ENCODE measurements at regions of chr4 and their contacts with region 1.

Region 1: DNA sequence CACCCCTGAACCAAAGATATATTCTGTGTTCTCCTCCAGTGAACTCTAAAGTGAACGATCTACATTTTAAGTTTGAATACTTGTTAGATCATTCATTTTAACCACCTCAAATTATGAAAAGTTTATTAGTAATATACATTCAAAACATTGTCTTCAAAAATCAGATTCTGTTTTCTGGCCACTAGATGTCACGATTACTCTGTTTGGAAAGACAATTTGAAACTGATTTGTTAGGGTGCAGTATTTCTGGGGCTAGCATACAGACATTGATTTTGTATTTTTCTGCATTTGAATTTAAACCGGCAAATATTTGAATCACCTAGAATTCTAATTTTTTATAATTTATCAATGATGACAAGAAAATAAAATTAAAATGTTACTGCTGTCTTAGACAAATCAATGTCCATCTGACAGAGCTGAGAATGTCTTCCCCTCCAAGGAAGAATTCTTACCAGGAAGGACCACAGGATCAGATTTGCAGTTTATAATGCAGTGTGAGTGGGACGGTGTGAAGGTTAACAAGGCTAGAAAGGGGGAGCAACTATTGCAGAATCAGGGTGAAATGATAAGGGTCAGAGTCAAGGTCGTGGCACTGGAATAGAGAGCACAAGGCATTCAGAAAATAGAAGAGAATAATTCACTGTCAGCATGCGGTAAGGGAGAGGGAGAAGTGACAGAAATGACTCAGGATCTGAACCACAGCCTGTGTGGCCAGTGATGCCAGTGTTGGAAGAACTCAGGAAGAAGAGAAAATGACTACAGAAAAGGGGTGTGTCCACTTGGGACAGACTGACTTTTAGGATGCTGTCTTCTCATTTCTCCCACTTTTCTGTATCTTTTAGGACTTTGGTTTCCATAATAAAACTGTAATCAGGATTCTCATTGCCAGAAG is 91.6 kb downstream of the ANXA10 start:
- DNase-seq: peak; percentile 51
- H3K4me3 ChIP-seq: no peak overlapping the region
- H3K27ac ChIP-seq: no peak overlapping the region
- H3K4me1 ChIP-seq: no peaks in the 10 kb centered on the region
- H3K27me3 ChIP-seq: no peaks in the 10 kb centered on the region
- CTCF ChIP-seq: peak; percentile 72

Region 2: GRCh38 chr4:167406181-167406580 is 777.8 kb before region 1 on chr4:
- CTCF ChIA-PET with region 1: no interaction called
- POLR2A ChIA-PET with region 1: no interaction called
- intact Hi-C with region 1: no loop called
- DNase-seq: no peak
- H3K4me3 ChIP-seq: no peak overlapping the region
- H3K27ac ChIP-seq: no peak overlapping the region
- H3K4me1 ChIP-seq: no peaks in the 10 kb centered on the region
- H3K27me3 ChIP-seq: no peaks in the 10 kb centered on the region
- CTCF ChIP-seq: no peak

Region 3: GRCh38 chr4:168514249-168514852 is 330.4 kb after region 1 on chr4:
- CTCF ChIA-PET with region 1: no interaction called
- POLR2A ChIA-PET with region 1: no interaction called
- intact Hi-C with region 1: loop called (anchors 5 kb)
- DNase-seq: peak; percentile 67
- H3K4me3 ChIP-seq: no peak overlapping the region
- H3K27ac ChIP-seq: no peak overlapping the region
- H3K4me1 ChIP-seq: peaks cover 4% of the 10 kb centered on the region
- H3K27me3 ChIP-seq: no peaks in the 10 kb centered on the region
- CTCF ChIP-seq: peak; percentile 65

Region 4: DNA sequence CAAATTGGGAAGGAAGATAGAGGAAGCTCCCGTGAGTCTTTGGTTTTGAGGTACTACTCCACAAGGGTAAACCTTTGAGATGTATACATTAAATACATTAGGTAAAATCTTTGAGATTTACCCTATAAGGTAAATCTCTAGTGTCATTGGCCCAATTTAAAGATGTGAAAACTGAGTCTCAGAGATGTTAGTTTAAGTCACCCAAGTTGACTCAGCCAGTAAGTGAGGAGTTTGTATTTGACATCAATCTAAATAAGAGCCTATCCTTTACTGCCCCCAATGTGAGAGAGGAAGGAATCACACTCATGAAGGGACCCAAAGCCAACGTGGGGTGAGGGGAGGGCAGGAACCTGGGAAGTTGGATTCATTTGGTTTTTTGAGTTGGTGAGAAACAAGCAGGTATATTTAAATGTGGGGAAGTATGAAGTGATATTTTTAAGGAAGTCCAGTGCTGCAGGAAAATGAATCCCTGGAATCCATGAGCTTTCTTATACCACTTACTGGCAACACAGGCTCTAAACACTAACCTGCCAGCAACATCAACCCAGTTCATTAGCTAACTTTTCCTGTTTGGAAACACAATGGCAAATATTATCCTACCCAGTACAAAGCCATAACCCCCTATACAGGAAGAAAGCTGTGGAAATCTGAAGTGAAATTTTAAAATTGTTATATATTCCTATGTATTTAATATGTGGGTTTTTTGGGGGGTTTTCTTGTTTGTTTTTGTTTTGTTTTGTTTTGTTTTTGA is 368.2 kb after region 1 on chr4:
- CTCF ChIA-PET with region 1: no interaction called
- POLR2A ChIA-PET with region 1: no interaction called
- intact Hi-C with region 1: loop called (anchors 10 kb)
- DNase-seq: peak; percentile 48
- H3K4me3 ChIP-seq: no peak overlapping the region
- H3K27ac ChIP-seq: no peak overlapping the region
- H3K4me1 ChIP-seq: peaks cover 42% of the 10 kb centered on the region
- H3K27me3 ChIP-seq: no peaks in the 10 kb centered on the region
- CTCF ChIP-seq: peak; percentile 42; the same call in 1 of the 2 replicates

Region 5: DNA sequence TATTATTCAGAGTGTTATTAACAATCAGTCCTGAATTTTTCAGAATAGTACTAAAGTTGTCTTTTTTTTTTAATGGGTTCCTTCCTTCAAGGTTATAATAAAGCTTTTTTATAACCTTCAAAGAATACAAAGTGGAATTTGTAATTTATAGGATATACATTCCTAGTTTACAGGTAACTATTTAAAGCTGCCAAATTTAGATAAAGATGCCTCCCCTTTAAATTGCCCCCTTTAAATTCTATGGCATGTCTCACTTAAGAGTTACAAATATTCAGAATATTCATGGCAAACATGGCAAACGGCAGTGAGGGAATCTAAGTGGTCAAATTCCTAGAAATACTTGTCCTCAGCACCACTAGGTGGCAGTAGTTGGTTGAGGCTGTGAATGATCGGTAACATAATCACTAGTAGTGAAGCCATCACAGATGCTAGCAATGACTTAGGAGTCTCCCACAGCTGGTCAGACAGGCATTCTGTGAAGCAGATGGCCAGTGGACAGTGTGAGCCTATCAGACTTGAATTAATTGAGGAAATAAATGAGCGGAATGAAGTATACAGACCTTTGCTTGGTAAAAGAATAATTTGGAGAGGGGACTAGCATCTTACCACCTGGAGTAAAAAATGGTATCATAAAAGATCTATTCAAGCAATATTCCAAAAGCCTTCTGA is 739.7 kb after region 1 on chr4:
- CTCF ChIA-PET with region 1: no interaction called
- POLR2A ChIA-PET with region 1: no interaction called
- intact Hi-C with region 1: loop called (anchors 5 kb)
- DNase-seq: peak; percentile 83
- H3K4me3 ChIP-seq: no peak overlapping the region
- H3K27ac ChIP-seq: no peak overlapping the region
- H3K4me1 ChIP-seq: no peaks in the 10 kb centered on the region
- H3K27me3 ChIP-seq: no peaks in the 10 kb centered on the region
- CTCF ChIP-seq: peak; percentile 80

Region 6: DNA sequence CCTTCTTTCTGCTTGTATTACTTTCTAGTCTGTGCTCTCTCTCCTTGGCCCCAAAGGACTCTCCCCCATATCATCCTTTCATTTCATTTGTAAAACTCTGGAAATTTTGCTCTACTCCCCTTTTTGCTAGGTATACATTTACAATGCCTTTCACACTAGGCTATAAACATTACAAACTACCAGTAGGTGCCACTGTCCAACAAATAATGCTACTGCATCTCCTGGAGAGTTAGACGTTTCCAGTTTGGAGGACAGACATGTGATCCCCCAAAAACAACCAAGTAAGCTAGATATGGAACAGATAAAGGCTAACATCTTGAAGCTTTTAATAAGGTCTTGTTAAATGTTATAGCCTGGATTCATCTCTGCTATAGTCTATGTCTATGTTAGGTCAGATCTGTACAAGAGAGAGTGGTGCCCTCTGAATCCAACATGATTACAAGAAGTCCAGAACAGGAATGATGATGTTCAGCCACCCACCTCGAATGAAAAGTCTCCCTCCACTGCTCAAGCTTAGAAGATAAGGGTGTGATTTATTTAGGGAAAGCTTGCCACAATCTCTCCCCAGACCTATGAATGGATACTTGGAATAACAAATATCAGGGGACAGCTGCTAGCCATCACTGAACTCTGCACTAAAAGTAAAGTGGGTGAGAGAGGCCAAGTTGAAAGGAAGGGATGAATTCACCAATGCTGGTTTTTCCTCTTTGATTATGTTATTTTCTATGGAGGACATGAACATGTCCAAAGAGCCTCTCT is 811.8 kb after region 1 on chr4:
- CTCF ChIA-PET with region 1: no interaction called
- POLR2A ChIA-PET with region 1: no interaction called
- intact Hi-C with region 1: loop called (anchors 5 kb)
- DNase-seq: peak; percentile 27
- H3K4me3 ChIP-seq: no peak overlapping the region
- H3K27ac ChIP-seq: no peak overlapping the region
- H3K4me1 ChIP-seq: peaks cover 13% of the 10 kb centered on the region
- H3K27me3 ChIP-seq: no peaks in the 10 kb centered on the region
- CTCF ChIP-seq: peak; percentile 37; the same call in 1 of the 2 replicates

Region 7: GRCh38 chr4:169492438-169493163 is 1308.6 kb after region 1 on chr4:
- CTCF ChIA-PET with region 1: no interaction called
- POLR2A ChIA-PET with region 1: no interaction called
- intact Hi-C with region 1: loop called (anchors 5 kb)
- DNase-seq: peak; percentile 62
- H3K4me3 ChIP-seq: no peak overlapping the region
- H3K27ac ChIP-seq: no peak overlapping the region
- H3K4me1 ChIP-seq: no peaks in the 10 kb centered on the region
- H3K27me3 ChIP-seq: no peaks in the 10 kb centered on the region
- CTCF ChIP-seq: peak; percentile 82

Measured in A673 (cell line).